ENCODE measurements at regions of chr11 and their contacts with region 1.

Region 1: GRCh38 chr11:65487413-65488272 is 11.2 kb upstream of the MALAT1 start:
- DNase-seq: peak; percentile 99
- H3K27ac ChIP-seq: peak overlapping the region; percentile 99
- CTCF ChIP-seq: no peak

Region 2: GRCh38 chr11:65213322-65214211 is 274.1 kb before region 1 on chr11:
- CTCF ChIA-PET with region 1: no interaction called
- POLR2A ChIA-PET with region 1: no interaction called
- DNase-seq: no peak
- H3K27ac ChIP-seq: peak overlapping the region; percentile 55
- CTCF ChIP-seq: no peak

Region 3: GRCh38 chr11:65524014-65524740 is 36.5 kb after region 1 on chr11:
- CTCF ChIA-PET with region 1: interaction called, 11 read pairs
- POLR2A ChIA-PET with region 1: no interaction called
- DNase-seq: no peak
- H3K27ac ChIP-seq: peak overlapping the region; percentile 77
- CTCF ChIP-seq: no peak